ENCODE measurements at regions of chr3 and their contacts with region 1.

Region 1: GRCh38 chr3:157201648-157202278 is 41.8 kb upstream of the CCNL1 start:
- DNase-seq: no peak
- H3K4me3 ChIP-seq: no peak overlapping the region
- H3K27ac ChIP-seq: no peak overlapping the region
- H3K4me1 ChIP-seq: peaks cover 0 to 11% (median 7%) of the 10 kb centered on the region in 4 donors
- H3K27me3 ChIP-seq: no peaks in the 10 kb centered on the region
- CTCF ChIP-seq: peak; percentile 18 to 37 (median 35)
- EP300 ChIP-seq: no peak
- POLR2A ChIP-seq: no peak

Region 2: DNA sequence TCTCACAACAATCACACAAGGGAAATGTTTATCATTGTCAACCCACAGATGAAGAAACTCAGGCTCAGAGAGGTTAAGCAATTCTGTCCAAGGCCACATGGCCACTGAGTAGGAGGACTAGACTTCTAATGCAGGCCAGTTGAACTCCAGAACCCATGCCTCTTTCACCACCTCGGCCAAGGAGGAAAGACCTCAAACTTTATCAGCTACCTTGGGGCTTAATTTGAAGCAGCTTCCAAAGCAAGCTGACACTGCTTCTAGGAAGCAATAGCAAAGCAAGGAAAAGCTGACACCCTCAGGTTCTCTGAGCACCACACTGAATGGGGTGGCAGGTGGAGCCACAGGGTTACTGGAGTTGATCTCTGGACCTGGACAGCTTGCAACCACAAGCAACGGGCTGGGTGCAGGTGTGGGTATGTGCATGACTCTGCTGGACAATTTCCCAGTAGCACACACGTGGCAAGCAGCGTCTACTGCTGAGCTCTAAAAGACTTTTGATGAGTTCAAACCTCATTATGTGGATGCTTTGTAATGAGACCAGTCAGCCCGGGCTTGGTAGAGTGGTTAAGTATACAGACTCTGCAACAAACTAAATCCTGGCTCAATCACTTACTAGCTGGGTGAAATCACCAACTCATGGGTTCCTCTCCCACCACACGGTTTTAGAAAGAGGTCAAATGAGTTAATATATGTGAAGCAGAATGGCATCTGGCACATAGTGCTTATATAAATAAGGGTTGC is 64.9 kb before region 1 on chr3:
- intact Hi-C with region 1: no loop called
- DNase-seq: no peak
- H3K4me3 ChIP-seq: no peak overlapping the region
- H3K27ac ChIP-seq: peak overlapping the region; percentile 31 to 75 (median 68)
- H3K4me1 ChIP-seq: peaks cover 0 to 40% (median 21%) of the 10 kb centered on the region in 4 donors
- H3K27me3 ChIP-seq: no peaks in the 10 kb centered on the region
- CTCF ChIP-seq: no peak
- EP300 ChIP-seq: no peak
- POLR2A ChIP-seq: no peak

Region 3: DNA sequence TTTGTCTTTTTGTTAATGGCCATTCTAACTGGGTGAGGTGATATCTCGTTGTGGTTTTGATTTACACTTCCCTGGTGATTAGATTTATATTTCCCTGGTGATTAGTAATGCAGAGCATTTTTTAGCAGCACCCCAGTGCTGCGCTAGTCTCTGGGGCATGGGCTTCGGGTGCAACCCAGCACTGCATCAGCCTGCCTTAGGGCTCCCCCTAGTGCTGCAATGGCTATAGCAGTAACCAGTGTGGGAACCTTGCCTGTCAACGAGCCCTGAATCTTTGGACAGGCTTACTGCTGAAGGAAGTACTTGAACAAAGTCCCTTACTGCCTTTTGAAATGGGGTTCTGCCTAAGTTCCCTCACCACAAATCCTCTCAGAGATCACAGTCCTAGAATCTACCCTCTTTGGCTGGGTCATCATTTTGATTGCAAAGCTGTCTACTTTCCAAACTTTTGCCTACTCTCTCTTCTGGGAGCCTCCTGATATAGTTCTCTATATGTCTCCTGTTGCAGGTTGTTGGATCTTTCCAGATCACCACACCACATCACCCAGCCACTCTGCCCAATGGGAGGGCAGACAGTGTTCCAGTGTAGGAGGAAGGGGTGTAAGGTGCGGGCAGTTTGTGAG is 37.4 kb after region 1 on chr3:
- intact Hi-C with region 1: loop called (anchors 5 kb)
- DNase-seq: peak; percentile 77
- H3K4me3 ChIP-seq: no peak overlapping the region
- H3K27ac ChIP-seq: peak overlapping the region in 3 of 4 donors; percentile 12 to 67 (median 55)
- H3K4me1 ChIP-seq: peaks cover 0 to 25% (median 19%) of the 10 kb centered on the region in 4 donors
- H3K27me3 ChIP-seq: no peaks in the 10 kb centered on the region
- CTCF ChIP-seq: peak; percentile 39 to 66 (median 56)
- EP300 ChIP-seq: no peak
- POLR2A ChIP-seq: no peak

Region 4: GRCh38 chr3:157257091-157257490 is 55.3 kb after region 1 on chr3:
- intact Hi-C with region 1: no loop called
- DNase-seq: no peak
- H3K4me3 ChIP-seq: no peak overlapping the region
- H3K27ac ChIP-seq: no peak overlapping the region
- H3K4me1 ChIP-seq: no peaks in the 10 kb centered on the region
- H3K27me3 ChIP-seq: no peaks in the 10 kb centered on the region
- CTCF ChIP-seq: no peak
- EP300 ChIP-seq: no peak
- POLR2A ChIP-seq: no peak

Region 5: GRCh38 chr3:157436583-157437291 is 235.0 kb after region 1 on chr3 and contains the start of gene PTX3:
- intact Hi-C with region 1: loop called (anchors 5 kb)
- DNase-seq: peak; percentile 75
- H3K4me3 ChIP-seq: peak within 1 kb of the TSS; percentile 38 to 78 (median 66)
- H3K27ac ChIP-seq: peak within 1 kb of the TSS; percentile 62 to 85 (median 74)
- H3K4me1 ChIP-seq: peaks cover 0 to 30% (median 8%) of the 10 kb centered on the region in 4 donors
- H3K27me3 ChIP-seq: no peaks in the 10 kb centered on the region
- CTCF ChIP-seq: no peak
- EP300 ChIP-seq: no peak
- POLR2A ChIP-seq: no peak
- total RNA-seq, gene PTX3: 0.83 to 34.2 (median 7.3) TPM

Region 6: DNA sequence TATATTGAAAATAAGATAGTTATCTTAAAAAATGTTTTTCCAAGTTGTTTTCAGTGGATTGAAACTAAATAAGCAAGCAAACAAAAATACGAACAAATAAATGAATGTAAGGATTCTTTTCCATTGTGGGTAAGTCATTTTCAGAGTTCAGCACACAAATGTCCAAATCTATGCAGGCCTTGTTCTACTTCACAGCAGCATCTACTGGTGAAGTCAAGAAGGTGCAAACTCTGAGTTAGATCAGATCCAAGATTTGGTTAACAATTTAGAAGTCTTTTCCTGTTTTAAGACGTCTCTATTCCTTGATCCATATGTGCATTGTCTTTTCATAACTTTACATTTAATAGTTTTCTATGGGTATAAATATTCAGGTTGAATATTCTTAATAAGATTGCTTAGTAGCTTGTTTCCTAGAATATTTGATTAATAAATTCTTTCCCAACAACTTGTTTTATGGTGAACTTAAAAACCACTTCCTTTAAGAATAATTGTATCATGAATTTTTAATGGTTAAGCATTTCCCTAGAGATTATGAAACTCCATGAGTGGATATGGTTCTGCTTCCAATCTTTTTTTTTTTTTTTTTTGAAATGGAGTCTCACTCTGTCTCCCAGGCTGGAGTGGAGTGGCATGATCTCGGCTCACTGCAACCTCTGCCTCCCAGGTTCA is 245.4 kb after region 1 on chr3:
- intact Hi-C with region 1: loop called (anchors 2 kb)
- DNase-seq: no peak
- H3K4me3 ChIP-seq: no peak overlapping the region
- H3K27ac ChIP-seq: no peak overlapping the region
- H3K4me1 ChIP-seq: no peaks in the 10 kb centered on the region
- H3K27me3 ChIP-seq: no peaks in the 10 kb centered on the region
- CTCF ChIP-seq: peak in 2 of 4 experiments; percentile 24 to 40
- EP300 ChIP-seq: no peak
- POLR2A ChIP-seq: no peak

Region 7: DNA sequence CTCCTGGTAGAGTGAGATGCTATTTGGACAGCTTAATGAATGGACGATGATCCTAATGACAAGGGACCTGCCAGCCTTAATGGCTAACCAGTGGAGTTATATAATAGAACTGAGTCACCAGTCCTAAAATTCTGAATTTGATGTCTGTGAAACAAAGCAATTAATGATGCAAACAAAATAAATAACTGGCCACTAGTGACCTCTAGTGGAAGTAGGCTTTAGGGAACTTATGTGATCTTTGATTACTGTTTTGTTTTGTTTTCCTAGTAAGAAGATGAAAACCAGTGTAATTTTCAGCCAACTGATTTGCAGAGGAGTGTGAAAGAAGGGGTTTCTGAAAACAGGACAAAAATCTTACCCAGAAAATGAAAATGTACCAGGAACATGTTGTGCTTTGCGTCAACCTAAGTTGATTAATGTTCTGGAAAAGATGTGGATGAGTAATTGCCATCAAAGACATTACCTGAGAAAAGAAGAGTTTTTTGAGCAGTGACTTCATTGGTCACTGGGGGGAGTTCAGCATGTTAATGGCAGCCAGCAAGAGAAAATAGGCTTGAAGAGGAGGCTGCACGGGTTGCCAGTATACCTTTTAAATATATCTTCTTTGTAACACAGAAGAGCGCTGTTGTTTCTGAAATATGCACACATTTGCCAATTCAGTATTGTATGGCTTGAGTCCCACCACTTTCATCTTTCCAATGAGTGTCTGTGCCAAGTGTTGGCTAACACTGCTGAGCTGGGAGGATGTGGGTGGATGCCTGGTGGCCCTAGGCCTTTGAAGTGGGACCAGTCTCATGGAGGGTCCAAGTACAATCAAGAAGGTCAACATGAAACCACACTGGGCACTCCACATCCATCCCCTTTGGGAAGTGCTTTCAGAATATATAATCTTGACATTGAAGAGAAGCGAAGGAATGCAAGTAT is 292.1 kb after region 1 on chr3:
- intact Hi-C with region 1: loop called (anchors 2 kb)
- DNase-seq: no peak
- H3K4me3 ChIP-seq: no peak overlapping the region
- H3K27ac ChIP-seq: no peak overlapping the region
- H3K4me1 ChIP-seq: no peaks in the 10 kb centered on the region
- H3K27me3 ChIP-seq: no peaks in the 10 kb centered on the region
- CTCF ChIP-seq: peak in 3 of 4 experiments; percentile 28 to 53 (median 40)
- EP300 ChIP-seq: no peak
- POLR2A ChIP-seq: no peak

Measured in sigmoid colon (tissue), 7 donors.